Aorta (tissue), 5 donors: ENCODE measurements at regions of chr6 and their contacts with region 1.

Region 1: DNA sequence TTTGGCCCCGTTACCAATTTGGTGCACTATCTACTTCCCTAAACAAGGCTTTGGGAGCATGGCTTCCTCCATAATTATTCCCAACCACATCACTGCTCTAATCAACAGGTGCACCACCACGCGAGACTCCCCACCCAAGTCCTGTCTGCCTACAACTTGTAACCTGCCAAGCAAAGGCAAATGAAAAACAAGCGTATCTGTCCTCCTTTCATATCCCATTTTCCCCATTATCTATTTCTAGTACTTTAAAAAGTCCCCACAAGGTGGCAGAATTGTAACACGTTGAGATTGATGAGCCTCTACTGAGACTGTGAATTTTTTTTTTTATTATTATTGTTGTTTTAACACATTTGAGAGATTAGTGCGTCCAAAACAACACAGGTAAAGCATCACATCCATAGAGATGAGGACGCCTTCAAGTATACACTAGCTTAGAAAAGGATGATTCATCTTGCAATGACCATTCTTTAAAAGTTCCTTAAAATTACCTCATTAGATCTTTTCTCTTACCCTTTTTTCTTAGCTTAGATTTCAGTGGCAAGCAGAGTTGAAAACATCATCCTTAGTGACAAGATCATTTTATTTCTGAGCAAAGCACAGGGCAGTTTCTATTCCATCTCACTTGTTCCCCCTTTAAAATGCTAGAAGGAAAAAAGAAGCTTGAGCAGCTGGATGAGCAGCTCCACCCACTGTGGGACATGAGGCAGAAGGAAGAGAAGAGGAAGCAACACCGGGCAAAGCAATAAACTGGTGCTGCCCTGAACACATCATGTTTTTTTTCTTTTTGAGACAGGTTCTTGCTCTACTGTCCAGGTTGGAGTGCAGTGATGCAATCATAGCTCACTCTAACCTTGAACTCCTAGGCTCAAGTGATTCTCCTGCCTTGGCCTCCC is 210.8 kb downstream of the ARHGAP18 start:
- DNase-seq: peak in 1 of 2 donors; percentile 50
- ATAC-seq: peak; percentile 81
- H3K4me3 ChIP-seq: no peak overlapping the region
- H3K27ac ChIP-seq: no peak overlapping the region
- H3K4me1 ChIP-seq: no peaks in the 10 kb centered on the region
- H3K27me3 ChIP-seq: no peaks in the 10 kb centered on the region

Region 2: DNA sequence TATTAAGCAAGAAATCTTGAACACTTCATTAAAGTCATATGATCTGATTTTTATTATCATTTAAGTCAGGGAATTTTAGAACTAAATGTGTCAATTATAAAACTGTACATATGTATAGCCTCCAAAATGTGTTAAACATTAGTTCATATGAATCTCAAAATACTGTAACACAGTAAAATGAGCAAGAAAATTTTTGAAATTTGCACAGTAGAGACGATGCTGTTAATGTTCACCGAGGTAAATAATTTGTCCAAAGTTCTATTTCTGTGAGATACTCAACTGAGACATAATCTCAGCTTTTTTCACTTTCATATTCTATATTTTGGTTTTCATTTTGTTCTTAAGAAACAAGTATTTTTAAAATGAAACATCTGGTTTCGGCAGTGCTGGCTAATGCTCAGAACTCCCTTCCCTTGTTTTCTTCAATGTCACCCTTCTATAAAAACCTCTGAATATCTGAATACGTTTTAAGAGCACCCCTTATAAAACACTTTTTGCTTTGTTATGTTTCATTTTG is 263.1 kb before region 1 on chr6:
- intact Hi-C with region 1: no loop called
- DNase-seq: no peak
- ATAC-seq: no peak
- H3K4me3 ChIP-seq: no peak overlapping the region
- H3K27ac ChIP-seq: no peak overlapping the region
- H3K4me1 ChIP-seq: no peaks in the 10 kb centered on the region
- H3K27me3 ChIP-seq: no peaks in the 10 kb centered on the region

Region 3: DNA sequence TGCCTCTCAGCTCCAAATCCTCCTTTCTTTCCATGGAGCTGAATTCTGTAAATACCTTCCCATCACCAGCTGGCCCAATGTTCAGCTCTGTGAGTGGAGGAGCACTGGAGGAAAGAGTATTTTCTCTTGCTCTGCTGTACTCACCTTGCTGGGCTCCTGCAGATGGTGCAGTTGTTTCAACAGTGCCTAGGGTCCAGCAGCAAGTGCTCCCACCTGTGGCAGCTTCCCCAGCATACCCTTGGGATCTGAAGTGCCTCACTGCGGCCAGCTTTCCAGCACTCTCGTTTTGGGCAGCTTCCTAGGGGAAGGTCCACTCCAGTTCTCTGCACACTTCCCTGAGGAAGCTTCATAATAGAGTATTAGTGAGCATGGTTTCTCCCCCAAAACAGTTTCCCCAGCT is 39.8 kb after region 1 on chr6:
- intact Hi-C with region 1: no loop called
- DNase-seq: no peak
- ATAC-seq: no peak
- H3K4me3 ChIP-seq: no peak overlapping the region
- H3K27ac ChIP-seq: no peak overlapping the region
- H3K4me1 ChIP-seq: no peaks in the 10 kb centered on the region
- H3K27me3 ChIP-seq: no peaks in the 10 kb centered on the region

Region 4: GRCh38 chr6:129575378-129576118 is 76.4 kb after region 1 on chr6:
- intact Hi-C with region 1: loop called (anchors 5 to 10 kb)
- DNase-seq: no peak
- ATAC-seq: peak; percentile 73
- H3K4me3 ChIP-seq: peak overlapping the region; percentile 39 to 73
- H3K27ac ChIP-seq: no peak overlapping the region
- H3K4me1 ChIP-seq: no peaks in the 10 kb centered on the region
- H3K27me3 ChIP-seq: no peaks in the 10 kb centered on the region

Region 5: GRCh38 chr6:130500693-130501092 is 1001.5 kb after region 1 on chr6:
- intact Hi-C with region 1: no loop called
- DNase-seq: no peak
- ATAC-seq: no peak
- H3K4me3 ChIP-seq: no peak overlapping the region
- H3K27ac ChIP-seq: no peak overlapping the region
- H3K4me1 ChIP-seq: no peaks in the 10 kb centered on the region
- H3K27me3 ChIP-seq: no peaks in the 10 kb centered on the region